Activated naive CD4-positive, alpha-beta T cell treated with anti-CD3 and anti-CD28 coated beads for 36 hours (primary cell): ENCODE measurements at regions of chr9 and their contacts with region 1.

Region 1: DNA sequence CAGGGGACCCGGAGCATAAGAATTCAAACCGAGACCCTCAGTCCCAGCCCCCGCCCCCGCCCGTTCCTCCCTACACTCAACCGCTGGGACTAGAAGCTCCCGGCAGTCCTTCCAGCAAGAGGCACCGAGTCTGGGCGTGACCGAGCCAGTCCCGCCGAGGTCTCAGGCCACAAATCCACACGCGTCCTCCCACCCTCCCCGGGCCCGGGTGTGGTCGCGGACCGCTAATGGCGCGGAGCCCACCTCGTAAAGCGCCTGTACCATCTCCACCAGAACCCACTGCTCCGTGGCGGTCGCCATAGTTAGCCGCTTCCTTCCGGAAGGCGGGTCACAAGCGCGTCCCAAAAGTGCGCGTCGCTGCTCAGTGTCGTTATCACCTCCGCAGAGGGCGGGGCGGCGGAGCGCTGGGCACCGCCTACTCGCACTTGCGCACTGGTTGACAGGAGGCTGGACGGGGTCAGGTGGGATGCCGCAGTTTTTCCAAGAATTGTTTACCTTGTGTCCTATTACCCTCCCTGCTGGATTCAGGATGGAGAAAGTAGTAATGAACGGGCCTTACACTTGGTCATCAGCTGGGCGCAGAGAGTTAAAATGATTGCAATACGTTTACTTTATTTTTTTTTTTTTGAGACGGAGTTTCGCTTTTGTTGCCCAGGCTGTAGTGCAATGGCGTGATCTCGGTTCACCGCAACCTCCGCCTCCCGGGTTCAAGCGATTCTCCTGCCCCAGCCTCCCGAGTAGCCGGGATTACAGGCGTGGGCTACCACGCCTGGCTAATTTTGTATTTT is at the start of gene SPTLC1:
- DNase-seq: peak; percentile 95
- H3K4me3 Mint-ChIP-seq: peak within 1 kb of the TSS; percentile 96
- H3K27ac Mint-ChIP-seq: peak within 1 kb of the TSS; percentile 97
- H3K4me1 Mint-ChIP-seq: peaks cover 25% of the 10 kb centered on the region
- H3K27me3 Mint-ChIP-seq: no peaks in the 10 kb centered on the region
- total RNA-seq, gene SPTLC1: 32.0 to 38.4 TPM

Region 2: DNA sequence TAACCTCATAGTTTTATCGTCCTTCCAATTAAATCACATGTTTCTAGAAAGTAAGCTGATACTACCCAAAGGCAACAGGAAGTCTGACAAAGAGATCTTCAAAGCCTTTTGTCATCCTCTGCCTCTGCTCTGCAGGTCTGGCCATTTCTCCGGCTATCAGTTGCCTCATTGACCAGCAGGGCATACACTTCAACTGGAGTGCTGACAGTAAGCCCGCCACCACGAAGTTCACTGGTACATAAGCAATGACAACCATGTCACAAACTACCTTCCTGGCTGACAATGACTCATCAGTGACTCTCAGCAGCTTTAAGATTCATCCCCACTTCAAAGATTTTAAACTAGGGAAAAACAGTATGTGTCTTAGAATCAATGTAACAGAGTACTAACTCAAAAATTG is 20.6 kb before region 1 on chr9:
- CTCF ChIA-PET with region 1: no interaction called
- intact Hi-C with region 1: loop called (anchors 1 kb)
- DNase-seq: peak; percentile 66
- H3K4me3 Mint-ChIP-seq: no peak overlapping the region
- H3K27ac Mint-ChIP-seq: peak overlapping the region; percentile 57
- H3K4me1 Mint-ChIP-seq: peaks cover 32% of the 10 kb centered on the region
- H3K27me3 Mint-ChIP-seq: no peaks in the 10 kb centered on the region

Region 3: DNA sequence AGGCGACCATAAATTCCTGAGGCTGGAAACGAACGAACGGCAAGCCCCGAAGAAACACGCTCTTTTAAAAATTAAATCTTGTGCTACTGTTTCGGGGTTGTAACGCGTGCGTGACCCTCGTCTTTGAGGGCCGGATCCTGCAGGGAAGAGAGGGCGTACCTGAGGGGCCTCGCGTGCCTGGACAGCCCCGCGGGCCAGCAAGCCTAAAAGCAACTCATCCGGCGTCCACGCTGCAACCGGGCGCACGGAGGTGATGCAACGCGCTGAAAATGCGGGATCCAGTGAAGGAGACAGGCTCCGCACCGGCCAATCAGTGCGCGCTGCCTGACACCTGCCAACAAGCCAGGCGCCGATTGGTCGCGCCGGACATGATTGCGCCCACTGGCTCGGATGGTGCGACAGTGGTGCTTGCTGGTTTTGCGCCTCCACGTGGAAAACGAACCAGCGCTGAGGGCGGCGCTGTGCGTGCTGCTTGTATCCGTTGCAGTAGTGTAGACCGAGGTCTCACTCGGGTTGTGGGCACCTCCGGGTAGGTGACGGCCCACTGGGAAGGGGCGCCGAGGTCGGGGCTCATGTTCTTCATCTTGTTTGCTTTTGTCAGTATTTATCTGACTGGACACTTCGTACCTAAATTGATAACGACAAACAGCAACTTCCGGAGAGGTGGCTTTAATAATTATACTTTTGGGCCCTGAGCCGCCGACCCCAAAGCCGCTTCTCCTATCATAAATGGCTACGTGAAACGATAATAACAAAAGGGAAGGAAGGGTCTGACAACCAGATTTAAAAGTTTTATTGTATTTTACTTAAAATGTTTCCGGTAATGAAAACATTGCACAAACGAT is 178.4 kb after region 1 on chr9 and contains the start of gene IARS1:
- CTCF ChIA-PET with region 1: no interaction called
- intact Hi-C with region 1: loop called (anchors 1 kb)
- DNase-seq: peak; percentile 100
- H3K4me3 Mint-ChIP-seq: peak within 1 kb of the TSS; percentile 95
- H3K27ac Mint-ChIP-seq: peak within 1 kb of the TSS; percentile 97
- H3K4me1 Mint-ChIP-seq: peaks cover 49% of the 10 kb centered on the region
- H3K27me3 Mint-ChIP-seq: no peaks in the 10 kb centered on the region
- total RNA-seq, gene IARS1: 271 to 272 TPM

Region 4: GRCh38 chr9:92325269-92325990 is 210.2 kb after region 1 on chr9 and contains the starts of genes CENPP and NOL8:
- CTCF ChIA-PET with region 1: no interaction called
- intact Hi-C with region 1: loop called (anchors 1 kb)
- DNase-seq: peak; percentile 88
- H3K4me3 Mint-ChIP-seq: peak within 1 kb of the TSS; percentile 99
- H3K27ac Mint-ChIP-seq: peak within 1 kb of the TSS; percentile 97
- H3K4me1 Mint-ChIP-seq: peaks cover 41% of the 10 kb centered on the region
- H3K27me3 Mint-ChIP-seq: no peaks in the 10 kb centered on the region
- total RNA-seq, gene CENPP: 24.9 to 26.5 TPM
- total RNA-seq, gene NOL8: 41.0 to 46.2 TPM

Region 5: DNA sequence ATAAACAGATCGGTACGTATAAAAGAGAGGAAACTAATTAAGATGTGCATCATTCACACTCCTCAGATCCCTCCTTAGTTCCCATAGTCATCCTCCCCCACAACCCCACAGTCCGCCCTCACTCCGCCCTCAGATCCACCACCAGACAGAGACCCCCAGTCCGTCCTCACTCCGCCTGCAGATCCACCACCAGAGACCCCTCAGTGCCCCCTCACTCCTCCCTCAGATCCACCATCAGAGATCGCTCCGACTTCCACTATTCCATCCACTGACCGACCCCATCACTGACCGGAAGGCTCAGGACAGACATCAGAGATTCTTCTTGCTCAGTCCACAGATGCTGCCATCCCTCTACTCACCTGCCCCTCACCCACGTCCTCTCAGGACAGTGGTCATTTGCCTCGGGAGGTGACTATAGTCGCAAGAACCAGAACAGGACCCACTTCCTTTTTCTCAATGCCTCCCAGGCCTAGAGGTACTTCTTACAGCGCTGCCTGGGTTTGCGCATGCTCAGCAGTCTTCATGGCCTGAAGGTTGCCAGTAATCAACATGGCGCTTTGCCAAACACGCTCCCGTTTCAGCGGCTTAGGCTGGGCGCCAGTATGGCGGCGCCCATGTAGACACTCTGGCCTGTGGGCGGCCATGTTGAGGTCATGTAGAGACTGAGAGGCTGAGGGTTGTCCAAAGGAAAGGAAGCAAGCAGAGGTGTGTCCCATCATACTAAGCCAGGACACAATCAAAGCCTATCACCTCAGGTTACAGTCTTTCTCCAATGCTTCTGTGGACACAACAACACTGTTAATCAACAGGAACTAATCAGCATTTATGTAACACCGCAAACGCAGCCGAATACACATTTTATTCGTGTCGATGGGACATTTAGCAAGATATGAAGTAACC is 762.5 kb after region 1 on chr9 and contains the start of gene ZNF484:
- CTCF ChIA-PET with region 1: no interaction called
- intact Hi-C with region 1: loop called (anchors 5 kb)
- DNase-seq: peak; percentile 99
- H3K4me3 Mint-ChIP-seq: peak within 1 kb of the TSS; percentile 87
- H3K27ac Mint-ChIP-seq: peak within 1 kb of the TSS; percentile 94
- H3K4me1 Mint-ChIP-seq: peaks cover 40% of the 10 kb centered on the region
- H3K27me3 Mint-ChIP-seq: no peaks in the 10 kb centered on the region
- total RNA-seq, gene ZNF484: 5.8 to 6.5 TPM